IMR-90 (cell line): ENCODE measurements at regions of chr2 and their contacts with region 1.

Region 1: DNA sequence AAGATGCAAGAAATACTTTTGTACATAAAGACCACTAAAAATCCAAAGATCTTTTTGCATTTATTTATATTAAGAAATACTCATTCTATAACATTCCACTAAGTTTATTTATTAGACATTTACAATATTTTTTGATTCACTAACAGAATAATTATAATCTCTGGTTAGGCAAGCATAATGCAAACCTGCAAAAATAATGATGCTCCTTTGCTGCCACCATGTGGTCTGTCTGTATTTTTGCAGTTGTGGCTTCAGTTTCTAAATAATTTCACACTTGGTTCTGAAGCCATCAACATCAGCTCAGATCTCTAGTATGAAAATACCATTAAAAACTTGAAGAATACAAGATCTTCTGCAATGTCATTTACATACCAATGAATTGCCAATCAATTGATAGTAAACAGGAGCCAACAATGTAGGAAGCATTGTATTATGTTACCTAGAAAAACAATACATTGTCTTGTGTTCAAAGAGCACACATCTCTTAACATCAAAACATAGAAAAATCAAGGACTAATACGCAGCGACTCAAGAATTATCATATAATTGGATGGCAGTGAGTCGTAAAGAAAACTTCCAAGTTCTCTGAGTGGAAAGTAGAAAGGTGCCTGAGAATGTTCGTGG is 28.8 kb upstream of the WDR75 start:
- DNase-seq: peak; percentile 74
- ATAC-seq: peak; percentile 70
- H3K4me3 ChIP-seq: no peak overlapping the region
- H3K27ac ChIP-seq: peak overlapping the region; percentile 81; the same call in 1 of the 2 replicates
- H3K4me1 ChIP-seq: peaks cover 14% of the 10 kb centered on the region
- H3K27me3 ChIP-seq: no peaks in the 10 kb centered on the region
- CTCF ChIP-seq: peak; percentile 80
- POLR2A ChIP-seq: no peak
- RAD21 ChIP-seq: peak; percentile 88

Region 2: DNA sequence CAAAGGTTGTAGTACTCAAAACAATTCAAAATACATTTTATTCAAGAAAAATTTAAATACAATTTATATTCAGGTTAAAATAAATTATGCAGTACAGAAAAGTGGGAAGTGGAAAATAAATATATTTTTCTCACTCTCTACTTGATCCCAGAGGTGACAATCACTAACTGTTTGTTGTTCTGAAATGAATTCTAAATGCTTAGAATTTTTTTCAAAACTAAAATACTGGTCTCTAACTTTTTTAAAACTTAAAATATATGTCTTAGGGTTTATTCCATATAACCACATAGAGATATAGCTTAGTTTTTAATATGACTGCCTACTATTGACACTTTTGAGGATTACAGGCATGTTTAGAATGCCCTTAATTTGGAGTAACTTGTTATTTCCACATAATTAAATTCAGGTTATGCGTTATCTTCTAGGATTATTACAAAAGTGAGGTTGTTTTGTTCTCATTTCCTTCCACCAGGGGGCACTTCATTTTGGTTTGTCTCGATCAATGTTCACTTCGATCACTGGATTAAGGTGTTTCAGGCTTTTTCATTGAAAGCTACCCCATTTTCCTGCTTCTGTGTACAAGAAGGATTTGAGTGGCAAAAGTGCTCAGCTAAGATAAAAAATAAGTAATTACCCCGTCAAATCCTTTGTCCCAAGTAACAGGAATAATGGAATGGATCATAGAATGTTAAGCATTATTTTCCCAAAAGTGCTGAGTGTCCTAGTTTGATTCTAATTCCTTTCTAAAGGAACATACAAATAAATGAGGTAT is 1831.1 kb before region 1 on chr2:
- CTCF ChIA-PET with region 1: no interaction called
- POLR2A ChIA-PET with region 1: no interaction called
- dilution Hi-C with region 1: no loop called
- in situ Hi-C with region 1: loop called (anchors 10 kb)
- intact Hi-C with region 1: loop called (anchors 5 kb)
- DNase-seq: peak; percentile 52
- ATAC-seq: peak; percentile 31; the same call in 1 of the 2 replicates
- H3K4me3 ChIP-seq: peak overlapping the region; percentile 39
- H3K27ac ChIP-seq: no peak overlapping the region
- H3K4me1 ChIP-seq: peaks cover 5% of the 10 kb centered on the region
- H3K27me3 ChIP-seq: no peaks in the 10 kb centered on the region
- CTCF ChIP-seq: peak; percentile 67
- POLR2A ChIP-seq: no peak
- RAD21 ChIP-seq: peak; percentile 52

Region 3: DNA sequence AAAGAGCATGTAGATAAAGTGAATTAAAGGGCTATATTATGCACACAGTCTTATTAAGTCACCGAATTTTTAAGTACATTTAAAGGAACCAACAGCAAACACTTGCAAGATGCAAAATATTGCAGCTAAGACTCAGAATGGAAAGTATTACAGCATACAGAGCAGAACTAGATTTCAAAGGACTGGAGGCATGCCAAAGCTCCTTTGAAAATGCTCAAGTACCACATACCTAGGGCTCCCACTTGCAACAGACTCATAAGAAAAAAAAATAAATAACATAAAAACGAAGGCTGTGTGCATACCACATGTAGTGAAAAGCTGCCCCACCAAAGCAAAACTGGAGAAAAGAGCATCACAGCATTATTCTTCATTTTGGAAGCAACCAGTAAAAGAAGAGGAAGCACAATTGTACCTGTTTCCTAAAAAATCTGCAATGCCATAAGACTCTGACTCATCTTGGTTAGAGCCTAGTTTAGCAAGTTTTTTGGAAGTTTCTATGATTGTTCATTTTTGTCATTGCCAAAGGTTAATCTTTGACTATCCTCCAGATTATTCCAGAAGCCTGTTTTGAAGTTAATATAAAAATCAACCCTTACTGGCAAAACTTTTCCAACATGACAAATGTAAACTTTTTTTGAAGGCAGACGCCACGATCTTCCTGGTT is 744.3 kb before region 1 on chr2:
- CTCF ChIA-PET with region 1: no interaction called
- POLR2A ChIA-PET with region 1: interaction called, 12 read pairs
- dilution Hi-C with region 1: no loop called
- in situ Hi-C with region 1: no loop called
- intact Hi-C with region 1: no loop called
- DNase-seq: peak; percentile 93
- ATAC-seq: peak; percentile 84
- H3K4me3 ChIP-seq: no peak overlapping the region
- H3K27ac ChIP-seq: no peak overlapping the region
- H3K4me1 ChIP-seq: no peaks in the 10 kb centered on the region; the same call in 1 of the 2 replicates
- H3K27me3 ChIP-seq: no peaks in the 10 kb centered on the region
- CTCF ChIP-seq: no peak
- POLR2A ChIP-seq: no peak
- RAD21 ChIP-seq: no peak

Region 4: GRCh38 chr2:189096769-189097447 is 315.5 kb before region 1 on chr2:
- CTCF ChIA-PET with region 1: interaction called, 3 read pairs
- POLR2A ChIA-PET with region 1: no interaction called
- dilution Hi-C with region 1: no loop called
- in situ Hi-C with region 1: loop called (anchors 10 kb)
- intact Hi-C with region 1: loop called (anchors 2 kb)
- DNase-seq: peak; percentile 95
- ATAC-seq: peak; percentile 82
- H3K4me3 ChIP-seq: no peak overlapping the region
- H3K27ac ChIP-seq: peak overlapping the region; percentile 99
- H3K4me1 ChIP-seq: peaks cover 10% of the 10 kb centered on the region
- H3K27me3 ChIP-seq: no peaks in the 10 kb centered on the region
- CTCF ChIP-seq: no peak
- POLR2A ChIP-seq: no peak
- RAD21 ChIP-seq: no peak

Region 5: DNA sequence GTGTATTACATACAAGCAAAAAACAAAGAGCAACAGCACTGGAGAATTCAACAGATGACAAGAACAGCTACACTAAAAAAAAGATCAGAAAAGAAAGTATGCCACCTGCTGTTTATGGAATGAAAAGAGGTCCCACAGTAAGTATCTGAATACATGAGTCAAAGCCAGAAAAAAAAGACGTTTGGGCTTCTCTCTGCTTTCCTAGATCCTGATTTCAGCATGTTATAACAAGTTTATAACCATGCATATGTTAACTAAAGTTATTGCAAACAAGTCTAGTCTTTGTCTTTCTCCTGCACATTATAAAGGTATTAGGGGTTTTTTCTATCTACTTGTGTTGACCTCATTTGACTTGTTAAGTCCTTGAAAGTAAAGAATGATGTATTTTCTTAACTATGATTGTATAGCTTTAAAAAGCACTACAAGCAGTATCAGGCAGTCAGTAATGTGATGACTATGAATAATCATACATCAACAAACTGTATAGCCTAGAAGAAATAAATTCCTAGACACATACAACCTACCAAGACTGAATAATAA is 124.4 kb before region 1 on chr2:
- CTCF ChIA-PET with region 1: no interaction called
- POLR2A ChIA-PET with region 1: no interaction called
- dilution Hi-C with region 1: no loop called
- in situ Hi-C with region 1: loop called (anchors 10 kb)
- intact Hi-C with region 1: loop called (anchors 2 kb)
- DNase-seq: peak; percentile 91
- ATAC-seq: peak; percentile 75
- H3K4me3 ChIP-seq: no peak overlapping the region
- H3K27ac ChIP-seq: peak overlapping the region; percentile 69; the same call in 1 of the 2 replicates
- H3K4me1 ChIP-seq: peaks cover 16% of the 10 kb centered on the region
- H3K27me3 ChIP-seq: no peaks in the 10 kb centered on the region
- CTCF ChIP-seq: peak; percentile 69
- POLR2A ChIP-seq: no peak
- RAD21 ChIP-seq: peak; percentile 81

Region 6: DNA sequence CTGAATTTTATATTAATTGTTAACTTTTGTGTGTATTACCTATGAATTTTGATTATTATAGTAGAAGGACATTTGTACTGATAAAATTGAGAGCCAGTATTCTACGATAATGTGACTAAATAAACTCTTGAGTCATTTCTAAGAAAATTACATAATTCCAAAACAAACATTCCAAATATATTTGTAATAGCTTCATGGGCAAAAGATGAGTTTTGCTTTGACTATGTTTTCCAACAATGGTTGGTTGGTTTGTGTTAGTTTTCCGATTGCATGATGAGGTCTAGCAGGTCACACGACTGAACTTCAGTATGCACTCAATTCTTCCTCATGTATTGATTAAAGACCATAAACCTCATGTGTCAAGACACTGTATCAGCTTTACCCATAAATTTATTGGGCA is 42.9 kb before region 1 on chr2:
- CTCF ChIA-PET with region 1: interaction called, 3 read pairs
- POLR2A ChIA-PET with region 1: interaction called, 3 read pairs
- dilution Hi-C with region 1: no loop called
- in situ Hi-C with region 1: no loop called
- intact Hi-C with region 1: loop called (anchors 1 kb)
- DNase-seq: peak; percentile 72
- ATAC-seq: peak; percentile 64
- H3K4me3 ChIP-seq: no peak overlapping the region
- H3K27ac ChIP-seq: no peak overlapping the region
- H3K4me1 ChIP-seq: peaks cover 2% of the 10 kb centered on the region; the same call in 1 of the 2 replicates
- H3K27me3 ChIP-seq: no peaks in the 10 kb centered on the region
- CTCF ChIP-seq: no peak
- POLR2A ChIP-seq: no peak
- RAD21 ChIP-seq: no peak

Region 7: DNA sequence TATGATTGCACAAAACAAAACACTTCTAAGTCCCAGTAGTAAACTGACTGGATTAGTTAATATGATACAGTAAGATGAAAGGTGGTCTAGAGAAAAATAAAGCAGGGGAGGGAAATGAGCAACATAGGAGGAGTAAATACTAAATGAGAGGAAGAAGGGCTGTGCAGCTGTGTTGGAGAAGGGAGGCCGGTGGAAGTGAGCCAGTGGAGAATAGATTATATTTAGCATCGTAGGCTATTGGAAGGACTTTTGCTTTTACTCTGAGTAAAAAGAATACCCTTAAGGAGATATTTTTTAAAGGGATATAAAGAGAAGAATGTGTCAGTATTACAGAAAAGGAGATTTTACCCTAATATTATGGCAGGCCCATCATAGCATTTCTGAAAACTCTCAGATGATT is 41.6 kb after region 1 on chr2:
- CTCF ChIA-PET with region 1: no interaction called
- POLR2A ChIA-PET with region 1: no interaction called
- dilution Hi-C with region 1: no loop called
- in situ Hi-C with region 1: no loop called
- intact Hi-C with region 1: no loop called
- DNase-seq: no peak
- ATAC-seq: no peak
- H3K4me3 ChIP-seq: no peak overlapping the region
- H3K27ac ChIP-seq: no peak overlapping the region
- H3K4me1 ChIP-seq: no peaks in the 10 kb centered on the region
- H3K27me3 ChIP-seq: no peaks in the 10 kb centered on the region
- CTCF ChIP-seq: no peak
- POLR2A ChIP-seq: no peak
- RAD21 ChIP-seq: no peak